K562 (cell line): ENCODE measurements at regions of chr5 and their contacts with region 1.

Region 1: DNA sequence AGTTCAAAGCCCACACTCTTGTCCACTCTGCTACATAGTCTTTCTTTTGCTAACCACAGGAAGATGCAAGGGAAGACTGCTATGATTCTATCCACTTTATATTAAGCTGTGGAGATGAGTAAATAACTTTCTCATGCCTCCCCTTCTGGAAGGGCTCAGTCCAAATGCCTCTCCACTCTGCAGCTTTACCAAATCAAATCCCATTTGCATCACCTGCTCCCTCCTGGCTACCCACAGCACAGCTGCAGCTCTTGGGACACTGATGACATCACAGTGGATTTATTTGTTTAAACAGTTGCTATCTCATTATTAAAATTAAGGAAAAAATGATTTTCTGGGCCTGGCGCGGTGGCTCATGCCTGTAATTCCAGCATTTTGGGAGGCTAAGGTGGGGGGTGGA is 1544.9 kb upstream of the WWC1 start:
- DNase-seq: no peak
- ATAC-seq: no peak
- H3K4me3 ChIP-seq: no peak overlapping the region
- H3K27ac ChIP-seq: no peak overlapping the region
- H3K4me1 ChIP-seq: no peaks in the 10 kb centered on the region
- H3K27me3 ChIP-seq: no peaks in the 10 kb centered on the region
- CTCF ChIP-seq: no peak
- EP300 ChIP-seq: no peak
- POLR2A ChIP-seq: no peak
- RAD21 ChIP-seq: no peak

Region 2: GRCh38 chr5:166772770-166773169 is 26.3 kb after region 1 on chr5:
- CTCF ChIA-PET with region 1: no interaction called
- POLR2A ChIA-PET with region 1: no interaction called
- in situ Hi-C with region 1: no loop called
- intact Hi-C with region 1: no loop called
- DNase-seq: no peak
- ATAC-seq: no peak
- H3K4me3 ChIP-seq: no peak overlapping the region
- H3K27ac ChIP-seq: no peak overlapping the region
- H3K4me1 ChIP-seq: no peaks in the 10 kb centered on the region
- H3K27me3 ChIP-seq: no peaks in the 10 kb centered on the region
- CTCF ChIP-seq: no peak
- EP300 ChIP-seq: no peak
- POLR2A ChIP-seq: no peak
- RAD21 ChIP-seq: no peak

Region 3: DNA sequence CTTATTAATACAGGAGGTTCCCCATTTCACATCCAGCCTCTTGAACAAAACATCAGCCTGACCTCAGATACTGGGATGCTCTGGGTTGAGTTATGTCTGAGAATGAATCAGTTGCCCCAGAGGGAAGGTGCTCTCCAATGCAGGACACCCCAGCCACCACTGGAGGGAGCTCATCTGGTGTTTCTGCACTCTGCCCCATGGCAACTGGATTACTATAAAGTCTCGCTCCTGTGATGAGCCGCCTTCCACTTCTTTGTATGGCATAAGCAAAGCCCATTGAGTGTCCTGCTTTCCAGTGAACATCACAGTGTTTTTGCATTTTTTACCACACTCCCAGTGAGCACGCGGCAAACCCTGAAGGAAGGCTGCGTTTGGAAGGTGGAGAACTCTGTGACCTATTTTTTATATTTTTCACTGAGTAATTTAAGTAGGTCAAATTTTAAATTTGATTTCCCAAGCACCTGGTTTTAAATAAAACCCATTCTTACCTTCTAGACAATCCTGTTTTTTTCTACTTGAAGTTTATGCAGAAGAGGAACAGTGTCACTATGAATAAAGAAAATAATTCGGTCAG is 1368.0 kb after region 1 on chr5:
- CTCF ChIA-PET with region 1: no interaction called
- POLR2A ChIA-PET with region 1: no interaction called
- in situ Hi-C with region 1: no loop called
- intact Hi-C with region 1: loop called (anchors 10 kb)
- DNase-seq: peak; percentile 52 to 65 (median 58)
- ATAC-seq: peak; percentile 96
- H3K4me3 ChIP-seq: no peak overlapping the region
- H3K27ac ChIP-seq: no peak overlapping the region
- H3K4me1 ChIP-seq: no peaks in the 10 kb centered on the region
- H3K27me3 ChIP-seq: no peaks in the 10 kb centered on the region
- CTCF ChIP-seq: peak; percentile 66 to 78 (median 68)
- EP300 ChIP-seq: no peak
- POLR2A ChIP-seq: no peak
- RAD21 ChIP-seq: peak; percentile 18 to 50; a peak in 2 of 4 replicates